ENCODE measurements at regions of chr14 and their contacts with region 1.

Region 1: GRCh38 chr14:61342486-61342885 is 21.1 kb downstream of the PRKCH start:
- DNase-seq: peak; percentile 60 to 93 (median 76)
- ATAC-seq: peak; percentile 57
- H3K4me3 ChIP-seq: peak overlapping the region; percentile 23
- H3K4me3 Mint-ChIP-seq: peak overlapping the region; percentile 87
- H3K27ac ChIP-seq: peak overlapping the region; percentile 79 to 88
- H3K27ac Mint-ChIP-seq: peak overlapping the region; percentile 99
- H3K4me1 ChIP-seq: peaks cover 90% of the 10 kb centered on the region
- H3K4me1 Mint-ChIP-seq: peaks cover 92% of the 10 kb centered on the region
- H3K27me3 ChIP-seq: no peaks in the 10 kb centered on the region
- H3K27me3 Mint-ChIP-seq: no peaks in the 10 kb centered on the region
- CTCF ChIP-seq: no peak

Region 2: DNA sequence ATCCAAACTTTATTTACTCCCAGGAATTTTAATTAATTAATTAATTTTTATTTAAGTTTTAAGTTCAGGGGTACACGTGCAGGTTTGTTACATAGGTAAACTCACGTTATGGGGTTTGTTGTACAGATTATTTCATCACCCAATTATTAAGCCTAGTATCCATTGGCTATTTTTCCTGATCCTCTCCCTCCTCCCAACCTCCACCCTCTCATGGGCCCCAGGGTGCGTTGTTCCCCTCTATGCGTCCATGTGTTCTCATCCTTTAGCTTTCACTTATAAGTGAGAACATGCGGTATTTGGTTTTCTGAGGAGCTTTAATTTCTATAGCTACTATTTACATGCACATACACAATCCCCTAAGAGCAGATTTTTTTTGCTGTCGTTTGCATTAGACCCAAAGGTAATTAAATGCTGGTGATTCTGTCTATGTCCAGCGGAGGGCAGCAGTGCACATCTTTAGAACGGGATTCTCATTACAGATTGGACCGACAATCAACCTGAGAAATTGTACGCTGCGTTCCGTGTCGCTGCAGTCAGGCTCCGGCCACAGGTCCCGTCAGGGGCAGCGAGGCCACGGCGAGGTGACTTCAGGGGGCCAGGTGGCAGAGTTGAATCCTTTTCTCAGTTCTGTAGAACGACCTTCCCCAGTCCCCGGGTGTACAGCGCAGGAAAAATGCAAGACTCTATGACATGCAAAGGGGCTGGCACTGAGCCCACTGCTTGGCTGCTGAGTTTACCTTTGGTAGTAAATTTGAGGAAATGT is 73.0 kb before region 1 on chr14:
- CTCF ChIA-PET with region 1: no interaction called
- POLR2A ChIA-PET with region 1: no interaction called
- intact Hi-C with region 1: no loop called
- DNase-seq: peak; percentile 61 to 88 (median 71)
- ATAC-seq: peak; percentile 97
- H3K4me3 ChIP-seq: peak overlapping the region; percentile 17
- H3K4me3 Mint-ChIP-seq: peak overlapping the region; percentile 42
- H3K27ac ChIP-seq: no peak overlapping the region
- H3K27ac Mint-ChIP-seq: no peak overlapping the region
- H3K4me1 ChIP-seq: peaks cover 6% of the 10 kb centered on the region
- H3K4me1 Mint-ChIP-seq: peaks cover 5% of the 10 kb centered on the region
- H3K27me3 ChIP-seq: peaks cover 4 to 25% of the 10 kb centered on the region in 2 experiments
- H3K27me3 Mint-ChIP-seq: peaks cover 60% of the 10 kb centered on the region
- CTCF ChIP-seq: peak; percentile 82

Region 3: GRCh38 chr14:61326847-61327246 is 15.6 kb before region 1 on chr14:
- CTCF ChIA-PET with region 1: interaction called, 23 read pairs
- POLR2A ChIA-PET with region 1: interaction called, 185 read pairs
- intact Hi-C with region 1: loop called (anchors 1 to 2 kb)
- DNase-seq: peak in 3 of 14 experiments; percentile 28 to 53 (median 41)
- ATAC-seq: no peak
- H3K4me3 ChIP-seq: peak overlapping the region; percentile 95
- H3K4me3 Mint-ChIP-seq: peak overlapping the region; percentile 96
- H3K27ac ChIP-seq: peak overlapping the region; percentile 54 to 75
- H3K27ac Mint-ChIP-seq: no peak overlapping the region
- H3K4me1 ChIP-seq: peaks cover 46% of the 10 kb centered on the region
- H3K4me1 Mint-ChIP-seq: peaks cover 68% of the 10 kb centered on the region
- H3K27me3 ChIP-seq: no peaks in the 10 kb centered on the region
- H3K27me3 Mint-ChIP-seq: no peaks in the 10 kb centered on the region
- CTCF ChIP-seq: no peak

Region 4: GRCh38 chr14:61362075-61362750 is 19.7 kb after region 1 on chr14:
- CTCF ChIA-PET with region 1: interaction called, 5 read pairs
- POLR2A ChIA-PET with region 1: interaction called, 18 read pairs
- intact Hi-C with region 1: loop called (anchors 2 kb)
- DNase-seq: no peak
- ATAC-seq: no peak
- H3K4me3 ChIP-seq: no peak overlapping the region
- H3K4me3 Mint-ChIP-seq: no peak overlapping the region
- H3K27ac ChIP-seq: peak overlapping the region in 1 of 2 donors; percentile 10
- H3K27ac Mint-ChIP-seq: no peak overlapping the region
- H3K4me1 ChIP-seq: peaks cover 76% of the 10 kb centered on the region
- H3K4me1 Mint-ChIP-seq: peaks cover 42% of the 10 kb centered on the region
- H3K27me3 ChIP-seq: no peaks in the 10 kb centered on the region
- H3K27me3 Mint-ChIP-seq: no peaks in the 10 kb centered on the region
- CTCF ChIP-seq: no peak

Region 5: GRCh38 chr14:61395115-61395725 is 52.7 kb after region 1 on chr14:
- CTCF ChIA-PET with region 1: interaction called, 3 read pairs
- POLR2A ChIA-PET with region 1: interaction called, 12 read pairs
- intact Hi-C with region 1: no loop called
- DNase-seq: peak in 3 of 14 experiments; percentile 24 to 48 (median 47)
- ATAC-seq: peak; percentile 50
- H3K4me3 ChIP-seq: no peak overlapping the region
- H3K4me3 Mint-ChIP-seq: peak overlapping the region; percentile 64
- H3K27ac ChIP-seq: no peak overlapping the region
- H3K27ac Mint-ChIP-seq: peak overlapping the region; percentile 82
- H3K4me1 ChIP-seq: peaks cover 56% of the 10 kb centered on the region
- H3K4me1 Mint-ChIP-seq: peaks cover 99% of the 10 kb centered on the region
- H3K27me3 ChIP-seq: no peaks in the 10 kb centered on the region
- H3K27me3 Mint-ChIP-seq: no peaks in the 10 kb centered on the region
- CTCF ChIP-seq: no peak

Measured in CD4-positive, alpha-beta T cell (primary cell).